ENCODE measurements at regions of chr1 and their contacts with region 1.

Region 1: GRCh38 chr1:36703526-36704208 is 221.0 kb upstream of the CSF3R start:
- DNase-seq: peak; percentile 83 to 89 (median 87)
- H3K4me3 ChIP-seq: no peak overlapping the region
- H3K27ac ChIP-seq: no peak overlapping the region
- H3K4me1 ChIP-seq: no peaks in the 10 kb centered on the region
- H3K27me3 ChIP-seq: peaks cover 2% of the 10 kb centered on the region
- CTCF ChIP-seq: peak; percentile 83

Region 2: DNA sequence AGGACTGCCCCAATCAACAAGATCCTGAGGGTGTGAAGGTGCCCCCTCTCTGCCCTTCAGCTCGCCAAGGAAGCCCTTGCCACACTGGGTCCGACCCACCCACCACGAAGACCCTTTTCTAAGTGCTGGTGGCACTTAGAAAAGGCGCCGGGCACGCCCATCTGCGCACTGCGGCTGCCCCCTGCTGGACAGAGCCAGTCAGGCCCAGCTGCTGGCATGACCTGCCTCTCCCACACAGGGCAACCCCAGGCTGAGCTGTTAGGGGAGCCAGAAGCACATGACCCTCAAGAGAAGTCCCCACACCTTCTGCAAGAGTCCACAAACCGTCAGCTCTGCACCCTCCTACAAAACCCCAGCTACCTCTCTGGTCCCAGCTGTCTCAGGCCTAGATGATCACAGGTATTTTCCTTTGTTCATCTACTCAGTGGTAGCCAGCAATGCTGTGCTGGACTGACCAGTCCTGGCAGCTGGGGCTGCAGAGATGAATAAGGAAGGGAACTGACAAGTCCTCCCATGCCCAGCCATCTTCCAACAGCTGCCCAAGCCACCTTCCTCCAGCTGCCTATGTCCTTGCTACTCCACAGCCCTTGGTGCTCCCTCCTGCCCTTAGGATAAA is 730.7 kb after region 1 on chr1:
- intact Hi-C with region 1: loop called (anchors 10 kb)
- DNase-seq: peak in 4 of 5 donors; percentile 56 to 76 (median 74)
- H3K4me3 ChIP-seq: no peak overlapping the region
- H3K27ac ChIP-seq: no peak overlapping the region
- H3K4me1 ChIP-seq: no peaks in the 10 kb centered on the region
- H3K27me3 ChIP-seq: no peaks in the 10 kb centered on the region
- CTCF ChIP-seq: peak; percentile 93

Region 3: GRCh38 chr1:37514350-37515184 is 810.9 kb after region 1 on chr1 and contains the start of gene MEAF6:
- intact Hi-C with region 1: no loop called
- DNase-seq: peak; percentile 87 to 95 (median 91)
- H3K4me3 ChIP-seq: peak within 1 kb of the TSS; percentile 79 to 92 (median 88)
- H3K27ac ChIP-seq: peak within 1 kb of the TSS; percentile 90 to 96
- H3K4me1 ChIP-seq: peaks cover 0 to 11% (median 7%) of the 10 kb centered on the region in 3 donors
- H3K27me3 ChIP-seq: no peaks in the 10 kb centered on the region
- CTCF ChIP-seq: peak; percentile 61
- total RNA-seq, gene MEAF6: 65.8 TPM